SK-N-SH (cell line): ENCODE measurements at regions of chr17 and their contacts with region 1.

Region 1: GRCh38 chr17:67376737-67377487 is at the start of gene PITPNC1:
- DNase-seq: peak; percentile 94
- H3K4me3 ChIP-seq: peak within 1 kb of the TSS; percentile 74 to 95
- H3K27ac ChIP-seq: peak within 1 kb of the TSS; percentile 97 to 98
- H3K4me1 ChIP-seq: peaks cover 16 to 21% of the 10 kb centered on the region in 2 experiments; a peak in 3 of 4 replicates
- H3K27me3 ChIP-seq: no peaks in the 10 kb centered on the region
- CTCF ChIP-seq: no peak
- EP300 ChIP-seq: no peak; a peak in 1 of 4 replicates
- RAD21 ChIP-seq: 0 out of 2 replicates have a peak, but pooled peaks have one; percentile 16
- polyA plus RNA-seq, gene PITPNC1: 14.0 and 18.4 TPM in 2 replicates

Region 2: GRCh38 chr17:67366193-67367157 is 10.4 kb before region 1 on chr17 and contains the start of gene PSMD12:
- CTCF ChIA-PET with region 1: interaction called, 134 read pairs
- POLR2A ChIA-PET with region 1: interaction called, 4 read pairs
- DNase-seq: peak; percentile 100
- H3K4me3 ChIP-seq: peak within 1 kb of the TSS; percentile 83 to 85
- H3K27ac ChIP-seq: peak within 1 kb of the TSS; percentile 87 to 90
- H3K4me1 ChIP-seq: peaks cover 14 to 18% of the 10 kb centered on the region in 2 experiments
- H3K27me3 ChIP-seq: no peaks in the 10 kb centered on the region
- CTCF ChIP-seq: no peak; the same call in 1 of the 2 replicates
- EP300 ChIP-seq: no peak; a peak in 1 of 4 replicates
- RAD21 ChIP-seq: 0 out of 2 replicates have a peak, but pooled peaks have one; percentile 22
- polyA plus RNA-seq, gene PSMD12: 29.1 and 31.4 TPM in 2 replicates

Region 3: GRCh38 chr17:67449845-67450755 is 73.2 kb after region 1 on chr17:
- CTCF ChIA-PET with region 1: interaction called, 10 read pairs
- POLR2A ChIA-PET with region 1: no interaction called
- DNase-seq: no peak
- H3K4me3 ChIP-seq: no peak overlapping the region
- H3K27ac ChIP-seq: no peak overlapping the region
- H3K4me1 ChIP-seq: peaks cover 0 to under 1% of the 10 kb centered on the region in 2 experiments; a peak in 2 of 4 replicates
- H3K27me3 ChIP-seq: no peaks in the 10 kb centered on the region
- CTCF ChIP-seq: no peak
- EP300 ChIP-seq: no peak
- RAD21 ChIP-seq: no peak

Region 4: DNA sequence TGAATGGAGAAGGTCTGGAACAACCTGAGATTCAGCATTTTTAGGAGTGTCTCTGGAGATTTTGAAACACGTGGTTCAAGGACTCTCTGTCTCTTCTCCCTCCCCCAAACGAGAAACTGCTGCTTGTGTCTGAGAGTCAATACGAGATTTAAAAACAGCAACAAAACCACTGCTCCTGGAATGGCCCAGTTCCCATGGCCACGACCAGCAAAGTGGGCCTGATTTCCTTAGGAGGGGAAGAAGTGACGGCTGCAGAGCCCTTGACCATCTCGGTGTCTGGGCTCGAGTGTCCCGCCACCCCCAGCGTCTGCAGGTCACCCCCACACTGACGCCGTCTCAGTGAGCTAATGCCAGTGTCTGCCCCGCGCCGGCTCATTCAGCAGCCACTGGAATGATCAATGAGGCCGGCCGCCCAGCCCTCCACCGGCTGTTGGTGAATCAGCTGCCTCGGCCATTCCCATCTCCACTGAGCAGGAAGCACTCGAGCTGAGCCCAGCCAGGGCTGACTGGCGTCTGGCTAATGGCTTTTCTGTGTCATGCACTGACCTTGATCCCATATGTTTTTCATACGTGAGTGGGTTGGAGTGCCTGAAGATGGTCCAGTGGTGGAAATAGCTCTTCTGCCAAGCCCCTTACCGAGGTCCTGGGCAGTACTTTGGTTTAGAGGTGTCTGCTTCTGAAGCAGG is 152.0 kb after region 1 on chr17:
- CTCF ChIA-PET with region 1: interaction called, 16 read pairs
- POLR2A ChIA-PET with region 1: no interaction called
- DNase-seq: peak; percentile 94
- H3K4me3 ChIP-seq: peak overlapping the region; percentile 33 to 48
- H3K27ac ChIP-seq: peak overlapping the region; percentile 93 to 95
- H3K4me1 ChIP-seq: peaks cover 6 to 32% of the 10 kb centered on the region in 2 experiments; a peak in 2 of 4 replicates
- H3K27me3 ChIP-seq: no peaks in the 10 kb centered on the region
- CTCF ChIP-seq: no peak
- EP300 ChIP-seq: peak; percentile 64 to 68
- RAD21 ChIP-seq: peak; percentile 37; the same call in 1 of the 2 replicates

Region 5: GRCh38 chr17:67629971-67630320 is 253.0 kb after region 1 on chr17:
- CTCF ChIA-PET with region 1: interaction called, 95 read pairs
- POLR2A ChIA-PET with region 1: interaction called, 4 read pairs
- DNase-seq: peak; percentile 59
- H3K4me3 ChIP-seq: no peak overlapping the region
- H3K27ac ChIP-seq: peak overlapping the region in 1 of 2 experiments; percentile 40; a peak in 1 of 4 replicates
- H3K4me1 ChIP-seq: peaks cover 0 to 4% of the 10 kb centered on the region in 2 experiments; a peak in 1 of 4 replicates
- H3K27me3 ChIP-seq: no peaks in the 10 kb centered on the region
- CTCF ChIP-seq: peak; percentile 72
- EP300 ChIP-seq: no peak
- RAD21 ChIP-seq: peak; percentile 74

Region 6: GRCh38 chr17:67689534-67690177 is 312.7 kb after region 1 on chr17:
- CTCF ChIA-PET with region 1: interaction called, 241 read pairs
- POLR2A ChIA-PET with region 1: interaction called, 4 read pairs
- DNase-seq: peak; percentile 77
- H3K4me3 ChIP-seq: no peak overlapping the region
- H3K27ac ChIP-seq: peak overlapping the region in 1 of 2 experiments; percentile 2; a peak in 1 of 4 replicates
- H3K4me1 ChIP-seq: no peaks in the 10 kb centered on the region
- H3K27me3 ChIP-seq: no peaks in the 10 kb centered on the region
- CTCF ChIP-seq: peak; percentile 99
- EP300 ChIP-seq: no peak
- RAD21 ChIP-seq: peak; percentile 93